H1 (cell line): ENCODE measurements at regions of chr16 and their contacts with region 1.

Region 1: GRCh38 chr16:78489072-78489471 is 389.6 kb downstream of the WWOX start:
- DNase-seq: no peak
- H3K4me3 ChIP-seq: no peak overlapping the region
- H3K27ac ChIP-seq: no peak overlapping the region
- H3K4me1 ChIP-seq: no peaks in the 10 kb centered on the region
- H3K27me3 ChIP-seq: no peaks in the 10 kb centered on the region
- CTCF ChIP-seq: no peak
- EP300 ChIP-seq: no peak
- POLR2A ChIP-seq: no peak
- RAD21 ChIP-seq: no peak

Region 2: DNA sequence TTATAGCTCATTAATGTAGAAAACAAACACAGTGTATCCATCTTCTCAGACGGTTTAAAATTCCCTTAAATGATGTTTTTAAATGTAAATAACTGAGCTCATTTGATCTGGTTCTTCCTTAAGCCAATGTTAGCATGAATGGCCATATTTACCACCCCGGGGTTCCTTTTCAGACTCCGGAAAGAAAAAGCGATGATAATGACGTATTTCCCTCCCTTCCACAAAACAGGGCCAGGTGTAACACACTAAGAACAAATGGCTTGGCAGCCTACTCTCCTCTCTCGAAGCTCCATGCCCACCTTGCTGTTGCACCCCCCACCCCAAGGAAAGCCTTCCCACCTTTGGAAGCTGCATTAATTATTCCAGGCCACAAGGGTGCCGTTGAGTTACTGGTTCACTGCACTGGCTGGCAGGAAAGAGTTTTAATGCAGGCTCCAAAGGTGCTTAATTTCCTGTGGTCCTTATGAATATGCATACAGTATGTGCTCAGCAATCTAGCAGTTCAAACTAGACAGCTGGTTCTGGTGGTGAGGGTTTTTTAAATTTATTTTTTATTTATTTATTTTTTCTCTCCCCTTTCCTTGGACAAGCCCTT is 10.7 kb before region 1 on chr16:
- CTCF ChIA-PET with region 1: interaction called, 16 read pairs
- POLR2A ChIA-PET with region 1: no interaction called
- DNase-seq: peak; percentile 10 to 64
- H3K4me3 ChIP-seq: no peak overlapping the region
- H3K27ac ChIP-seq: no peak overlapping the region
- H3K4me1 ChIP-seq: peaks cover 0 to 9% (median 3%) of the 10 kb centered on the region in 4 experiments; a peak in 5 of 7 replicates
- H3K27me3 ChIP-seq: no peaks in the 10 kb centered on the region
- CTCF ChIP-seq: peak; percentile 51 to 68 (median 65)
- EP300 ChIP-seq: no peak
- POLR2A ChIP-seq: no peak
- RAD21 ChIP-seq: peak; percentile 51 to 60